Activated CD8-positive, alpha-beta memory T cell treated with anti-CD3 and anti-CD28 coated beads, Interleukin-2, amount 10 ng/mL, durations not matched to agents 7 days and 5 days (primary cell): ENCODE measurements at regions of chr9 and their contacts with region 1.

Region 1: DNA sequence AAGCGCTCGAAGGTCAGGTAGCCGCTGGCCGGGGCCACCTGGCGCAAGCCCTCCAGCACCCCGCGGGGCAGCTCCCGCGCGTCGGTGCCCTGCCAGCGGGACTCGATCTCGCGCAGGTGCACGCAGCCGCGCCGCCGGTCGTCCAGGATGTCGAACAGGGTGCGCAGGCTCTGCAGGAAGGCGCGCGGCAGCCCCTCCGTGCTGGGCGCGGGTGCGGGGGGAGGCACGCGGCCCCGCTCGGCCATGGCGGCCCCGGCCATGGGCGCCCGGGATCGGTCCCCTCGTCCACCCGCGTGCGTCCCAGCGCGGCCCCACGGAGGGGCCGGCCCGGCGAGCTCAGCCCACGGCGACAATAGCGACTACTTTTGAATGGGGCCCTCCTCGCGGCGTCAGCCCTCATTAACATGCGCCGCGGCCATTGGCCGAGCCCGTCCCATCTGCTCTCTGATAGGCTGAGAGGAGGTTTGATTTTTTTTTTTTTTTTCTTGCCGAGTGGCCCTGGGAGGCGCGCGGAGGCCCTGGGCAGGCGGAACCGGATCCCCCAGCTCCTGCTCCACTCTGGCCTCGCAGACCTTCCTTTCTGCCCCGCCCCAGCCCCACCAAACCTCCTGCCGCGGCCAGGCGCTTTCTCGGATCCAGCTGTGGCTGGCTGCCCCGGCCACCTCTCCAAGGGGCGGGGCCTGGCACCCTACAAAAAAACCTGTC is at the start of gene SAPCD2:
- DNase-seq: peak; percentile 93
- ATAC-seq: peak; percentile 91
- H3K4me3 Mint-ChIP-seq: peak within 1 kb of the TSS; percentile 78
- H3K27ac Mint-ChIP-seq: peak within 1 kb of the TSS; percentile 83
- H3K4me1 Mint-ChIP-seq: peaks cover 27% of the 10 kb centered on the region
- H3K27me3 Mint-ChIP-seq: no peaks in the 10 kb centered on the region
- total RNA-seq, gene SAPCD2: 31.9 to 40.1 TPM

Region 2: GRCh38 chr9:137046098-137046787 is 24.1 kb before region 1 on chr9 and contains the start of gene NPDC1:
- CTCF ChIA-PET with region 1: interaction called, 183 read pairs
- DNase-seq: peak; percentile 89
- ATAC-seq: peak; percentile 82
- H3K4me3 Mint-ChIP-seq: peak within 1 kb of the TSS; percentile 71
- H3K27ac Mint-ChIP-seq: no peak within 1 kb of the TSS
- H3K4me1 Mint-ChIP-seq: peaks cover 16% of the 10 kb centered on the region
- H3K27me3 Mint-ChIP-seq: peaks cover 43% of the 10 kb centered on the region
- total RNA-seq, gene NPDC1: 30.4 to 55.6 TPM

Region 3: DNA sequence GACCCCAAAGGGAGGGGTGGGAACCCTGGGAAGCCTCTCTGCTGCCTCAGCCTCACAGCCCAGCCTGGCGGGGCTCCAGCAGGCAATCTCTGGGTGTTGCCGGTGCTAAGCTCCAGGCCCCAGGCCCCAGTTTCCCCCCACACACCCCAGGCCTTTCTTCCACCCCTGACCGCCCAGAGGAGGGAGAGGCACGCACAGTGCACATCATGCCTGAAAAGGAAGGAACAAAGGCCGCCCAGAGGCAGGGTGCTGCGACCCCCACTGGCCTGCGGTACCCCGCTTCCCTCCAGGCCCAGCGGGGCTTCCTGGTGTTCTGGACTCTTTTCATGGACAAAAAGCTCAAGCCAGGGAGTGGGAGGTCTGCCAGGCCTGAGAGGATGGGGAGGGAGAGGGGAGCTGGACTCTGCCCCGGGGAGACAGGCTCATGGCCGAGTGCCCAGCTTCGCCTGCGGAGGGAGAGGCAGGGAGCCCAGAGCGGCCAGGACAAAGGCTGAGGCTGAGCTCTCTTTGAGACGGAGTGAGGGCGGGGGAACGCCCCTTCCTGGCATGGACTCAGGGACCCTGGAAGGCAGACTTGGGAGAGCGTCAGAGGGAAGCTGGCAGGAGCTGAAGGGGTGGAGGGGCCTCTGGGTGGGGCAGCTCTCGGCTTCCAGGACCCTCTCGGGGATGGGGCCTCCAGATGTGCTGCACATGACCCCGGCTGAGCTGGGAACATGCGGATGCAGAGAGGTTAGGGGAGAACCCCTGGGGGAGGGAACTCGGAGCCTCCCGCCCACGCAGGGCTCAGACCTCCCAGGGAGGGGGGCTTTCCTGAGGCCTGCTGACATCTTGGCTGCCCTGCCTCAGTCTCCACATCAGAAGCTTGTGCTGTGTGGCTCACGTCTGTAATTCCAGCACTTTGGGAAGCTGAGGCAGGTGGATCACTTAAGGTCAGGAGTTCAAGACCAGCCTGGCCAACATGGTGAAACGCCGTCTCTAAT is 14.7 kb before region 1 on chr9:
- CTCF ChIA-PET with region 1: interaction called, 183 read pairs
- DNase-seq: no peak
- ATAC-seq: no peak
- H3K4me3 Mint-ChIP-seq: no peak overlapping the region
- H3K27ac Mint-ChIP-seq: no peak overlapping the region
- H3K4me1 Mint-ChIP-seq: peaks cover 2% of the 10 kb centered on the region
- H3K27me3 Mint-ChIP-seq: peaks cover 23% of the 10 kb centered on the region

Region 4: GRCh38 chr9:137086531-137087408 is 16.4 kb after region 1 on chr9 and contains the start of gene MAN1B1:
- CTCF ChIA-PET with region 1: interaction called, 138 read pairs
- DNase-seq: peak; percentile 100
- ATAC-seq: peak; percentile 86
- H3K4me3 Mint-ChIP-seq: peak within 1 kb of the TSS; percentile 82
- H3K27ac Mint-ChIP-seq: peak within 1 kb of the TSS; percentile 90
- H3K4me1 Mint-ChIP-seq: peaks cover 41% of the 10 kb centered on the region
- H3K27me3 Mint-ChIP-seq: no peaks in the 10 kb centered on the region
- total RNA-seq, gene MAN1B1: 43.8 to 60.6 TPM

Region 5: DNA sequence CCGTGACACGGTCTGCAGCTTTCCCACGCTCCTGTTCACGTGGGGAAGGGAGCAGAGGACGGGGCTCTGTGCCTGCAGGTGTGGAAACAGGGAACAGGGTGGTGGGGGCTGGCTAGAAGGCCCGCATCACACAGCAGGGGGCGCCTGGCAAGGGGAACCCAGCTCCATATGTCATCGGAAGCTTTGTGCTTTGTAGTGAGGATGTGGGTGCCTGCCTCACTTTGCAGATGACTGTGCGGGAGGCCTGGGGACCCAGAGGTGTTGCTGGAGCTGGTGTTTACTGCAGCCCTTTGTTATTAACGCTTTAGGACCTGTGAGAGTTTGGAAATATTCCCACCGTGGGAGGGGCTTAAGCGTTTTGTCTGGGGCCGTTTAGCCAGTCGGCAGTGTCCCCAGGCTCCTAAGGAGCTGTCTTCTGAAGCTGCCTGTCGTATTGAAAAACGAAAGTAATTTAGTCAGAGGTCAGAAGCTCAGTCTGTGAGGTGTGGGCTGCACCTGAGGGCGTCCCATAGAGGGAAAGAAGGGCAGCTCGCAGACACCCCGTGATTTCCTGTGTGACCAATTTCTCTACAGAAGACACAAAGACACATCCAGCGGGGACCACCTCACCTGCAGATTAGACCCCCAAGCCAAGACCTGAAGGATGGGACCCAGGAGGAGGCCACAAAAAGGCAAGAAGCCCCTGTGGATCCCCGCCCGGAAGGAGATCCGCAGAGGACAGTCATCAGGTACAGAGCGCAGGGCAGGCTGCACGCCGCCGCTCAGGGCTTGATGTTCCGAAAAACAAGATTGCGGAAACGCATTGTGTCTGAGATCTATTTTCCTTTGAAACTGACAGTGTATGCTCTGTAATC is 25.5 kb after region 1 on chr9:
- CTCF ChIA-PET with region 1: interaction called, 138 read pairs
- DNase-seq: peak; percentile 95
- ATAC-seq: peak; percentile 98
- H3K4me3 Mint-ChIP-seq: peak overlapping the region; percentile 85
- H3K27ac Mint-ChIP-seq: peak overlapping the region; percentile 97
- H3K4me1 Mint-ChIP-seq: peaks cover 30% of the 10 kb centered on the region
- H3K27me3 Mint-ChIP-seq: no peaks in the 10 kb centered on the region